ENCODE measurements at regions of chr3 and their contacts with region 1.

Region 1: DNA sequence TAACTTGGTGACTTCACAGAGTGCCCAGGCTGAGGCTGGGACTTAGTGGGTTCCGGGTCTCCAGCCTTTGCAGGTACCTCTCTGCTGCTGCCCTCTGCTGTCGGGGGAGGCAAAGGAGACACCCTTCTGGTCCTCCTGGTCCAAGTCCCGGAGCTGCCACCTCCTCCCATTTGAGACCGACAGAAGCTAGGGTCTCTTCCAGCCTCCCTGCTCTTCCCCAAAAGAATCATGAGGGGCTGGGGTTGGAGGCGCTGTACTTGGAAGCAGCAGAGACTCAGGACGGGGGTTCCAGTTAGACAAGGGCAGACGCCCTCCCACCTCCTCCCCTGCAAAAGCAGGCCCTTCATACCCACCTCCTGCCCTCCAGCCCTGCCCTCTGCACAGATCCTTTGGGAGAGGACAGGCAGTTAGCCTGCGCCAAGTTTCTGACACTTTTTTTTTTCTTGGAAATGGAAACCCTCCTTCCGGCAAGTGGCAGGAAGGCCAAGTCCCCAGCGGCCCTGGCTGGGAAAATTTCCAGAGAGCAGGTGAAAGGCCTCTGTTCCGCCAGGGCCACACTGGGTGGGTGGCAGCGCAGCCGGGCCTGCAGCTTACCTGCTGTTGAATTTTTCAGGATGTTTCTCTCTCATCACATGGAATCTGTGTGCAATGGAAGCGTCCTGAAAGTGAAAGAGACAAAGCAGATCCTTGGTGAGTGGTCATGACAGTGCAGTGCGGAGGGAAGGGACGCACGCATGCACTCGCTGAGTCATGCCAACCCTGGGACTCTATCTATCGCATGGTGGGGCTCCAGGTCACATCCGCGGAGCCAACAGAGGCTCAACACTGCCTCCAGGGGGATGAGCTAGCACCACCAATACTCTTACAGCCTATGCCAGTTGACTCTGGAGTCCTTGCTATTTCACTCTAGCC is 119.9 kb downstream of the DGKG start:
- DNase-seq: peak; percentile 92
- ATAC-seq: peak; percentile 99 to 100
- H3K4me3 ChIP-seq: peak overlapping the region; percentile 51
- H3K27ac ChIP-seq: peak overlapping the region; percentile 90 to 93
- H3K4me1 ChIP-seq: peaks cover 12% of the 10 kb centered on the region
- CTCF ChIP-seq: peak; percentile 65
- EP300 ChIP-seq: no peak
- POLR2A ChIP-seq: peak; percentile 37; the same call in 1 of the 2 replicates
- RAD21 ChIP-seq: peak; percentile 64 to 69

Region 2: DNA sequence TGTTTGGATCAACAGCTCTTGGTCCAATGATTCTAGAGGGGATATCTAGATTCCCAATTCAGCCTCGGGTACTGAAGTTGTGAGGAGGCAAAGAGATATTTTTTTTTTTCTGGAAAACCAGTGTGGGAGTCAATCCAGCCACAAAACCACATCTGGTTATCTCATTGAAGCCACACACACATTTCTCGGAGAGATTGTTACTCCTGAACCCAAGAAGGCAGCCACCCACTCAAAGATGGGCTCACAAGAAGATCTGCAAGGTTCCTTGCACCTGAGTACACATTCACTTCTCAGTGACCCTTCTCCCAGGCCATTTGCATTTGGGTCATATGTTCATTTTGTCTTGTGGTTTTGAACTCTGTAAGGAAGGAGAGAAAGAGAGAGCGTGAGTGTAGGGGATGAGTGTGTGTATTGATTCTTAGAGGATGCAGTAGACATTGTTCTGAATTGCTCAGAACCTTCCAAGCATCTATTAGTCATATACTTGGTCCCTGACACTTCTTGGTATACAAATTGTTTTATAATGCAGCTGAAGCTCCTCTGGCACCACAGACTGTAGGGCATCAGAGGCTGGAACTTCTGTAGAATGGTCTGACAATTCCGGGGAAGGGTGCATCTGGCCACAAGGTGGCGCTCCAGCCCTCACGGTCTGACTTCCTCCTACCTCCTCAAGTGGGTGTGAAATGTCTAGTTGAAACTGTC is 265.0 kb before region 1 on chr3:
- CTCF ChIA-PET with region 1: interaction called, 36 read pairs
- POLR2A ChIA-PET with region 1: interaction called, 9 read pairs
- DNase-seq: peak; percentile 42 to 71
- ATAC-seq: peak; percentile 84 to 88
- H3K4me3 ChIP-seq: no peak overlapping the region
- H3K27ac ChIP-seq: no peak overlapping the region
- H3K4me1 ChIP-seq: peaks cover 8% of the 10 kb centered on the region; the same call in 1 of the 3 replicates
- CTCF ChIP-seq: peak; percentile 83
- EP300 ChIP-seq: no peak
- POLR2A ChIP-seq: no peak
- RAD21 ChIP-seq: peak; percentile 47 to 50; a peak in 3 of 5 replicates

Region 3: GRCh38 chr3:185983495-185984141 is 258.5 kb before region 1 on chr3:
- CTCF ChIA-PET with region 1: interaction called, 36 read pairs
- POLR2A ChIA-PET with region 1: interaction called, 9 read pairs
- DNase-seq: peak; percentile 61 to 76
- ATAC-seq: peak; percentile 80
- H3K4me3 ChIP-seq: no peak overlapping the region
- H3K27ac ChIP-seq: peak overlapping the region in 1 of 2 experiments; percentile 52; a peak in 3 of 6 replicates
- H3K4me1 ChIP-seq: peaks cover 32% of the 10 kb centered on the region
- CTCF ChIP-seq: peak; percentile 73
- EP300 ChIP-seq: no peak
- POLR2A ChIP-seq: no peak
- RAD21 ChIP-seq: peak; percentile 82 to 86

Region 4: DNA sequence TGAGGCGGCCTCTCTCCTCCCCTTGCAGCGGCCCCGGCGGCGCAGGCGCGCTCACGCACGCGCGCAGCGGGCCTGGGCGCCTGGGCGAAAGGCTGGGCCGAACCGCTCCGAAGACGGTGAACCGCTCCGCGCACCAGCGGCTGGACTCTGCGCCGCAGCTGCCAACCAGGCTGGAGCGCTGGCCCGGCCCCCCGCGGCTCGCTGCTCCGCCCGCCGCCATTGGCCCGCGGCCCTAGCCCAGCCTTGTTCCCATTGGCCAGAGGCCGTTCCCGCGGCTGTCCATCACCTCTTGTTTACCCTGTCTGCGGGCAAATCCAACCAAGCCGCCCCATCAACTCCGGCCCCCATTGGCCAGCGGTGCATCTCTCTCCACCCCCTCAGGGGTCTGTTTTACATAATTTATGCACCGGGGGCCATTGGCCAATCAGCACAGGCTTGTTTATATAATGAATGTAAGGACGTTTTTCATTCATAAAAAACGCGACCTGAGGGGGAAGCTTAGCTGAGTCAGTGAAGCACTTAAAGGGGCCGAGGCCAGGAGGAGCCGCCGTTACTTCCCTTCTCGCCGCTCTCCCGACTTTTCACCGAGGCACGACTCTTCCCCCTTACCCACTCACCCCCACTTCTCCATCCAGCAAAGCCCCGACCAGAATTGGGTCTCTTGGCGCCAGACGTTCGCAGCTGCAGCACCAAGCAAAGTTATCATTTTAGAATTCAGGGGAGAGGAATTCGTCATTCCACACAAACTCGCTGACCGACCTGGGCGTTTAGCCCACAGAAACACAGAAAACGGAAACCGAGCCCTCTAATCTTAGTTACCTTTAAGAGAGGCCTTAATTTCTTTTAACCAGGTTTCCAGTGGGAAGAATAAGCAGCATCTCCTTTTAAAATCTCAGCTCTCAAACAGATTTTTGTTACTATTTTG is 133.0 kb before region 1 on chr3 and contains the start of gene ETV5:
- CTCF ChIA-PET with region 1: interaction called, 3 read pairs
- POLR2A ChIA-PET with region 1: interaction called, 11 read pairs
- DNase-seq: peak; percentile 97 to 98
- ATAC-seq: peak; percentile 92
- H3K4me3 ChIP-seq: peak within 1 kb of the TSS; percentile 87
- H3K27ac ChIP-seq: peak within 1 kb of the TSS; percentile 94 to 99
- H3K4me1 ChIP-seq: peaks cover 35% of the 10 kb centered on the region
- CTCF ChIP-seq: no peak
- EP300 ChIP-seq: no peak
- POLR2A ChIP-seq: peak; percentile 85
- RAD21 ChIP-seq: no peak
- polyA plus RNA-seq, gene ETV5: 47.0 and 54.7 TPM in 2 replicates

Region 5: GRCh38 chr3:186217820-186218164 is 24.4 kb before region 1 on chr3:
- CTCF ChIA-PET with region 1: interaction called, 11 read pairs
- POLR2A ChIA-PET with region 1: no interaction called
- DNase-seq: no peak
- ATAC-seq: no peak
- H3K4me3 ChIP-seq: no peak overlapping the region
- H3K27ac ChIP-seq: no peak overlapping the region
- H3K4me1 ChIP-seq: no peaks in the 10 kb centered on the region
- CTCF ChIP-seq: no peak
- EP300 ChIP-seq: no peak
- POLR2A ChIP-seq: no peak
- RAD21 ChIP-seq: no peak

Region 6: GRCh38 chr3:186259612-186260383 is 17.6 kb after region 1 on chr3:
- CTCF ChIA-PET with region 1: interaction called, 37 read pairs
- POLR2A ChIA-PET with region 1: no interaction called
- DNase-seq: peak; percentile 72
- ATAC-seq: peak; percentile 100
- H3K4me3 ChIP-seq: no peak overlapping the region
- H3K27ac ChIP-seq: peak overlapping the region; percentile 22 to 46; a peak in 3 of 6 replicates
- H3K4me1 ChIP-seq: no peaks in the 10 kb centered on the region; the same call in 2 of the 3 replicates
- CTCF ChIP-seq: peak; percentile 76
- EP300 ChIP-seq: no peak
- POLR2A ChIP-seq: no peak
- RAD21 ChIP-seq: peak; percentile 76 to 81

Region 7: GRCh38 chr3:186320862-186321568 is 78.8 kb after region 1 on chr3:
- CTCF ChIA-PET with region 1: no interaction called
- POLR2A ChIA-PET with region 1: no interaction called
- DNase-seq: no peak
- ATAC-seq: no peak
- H3K4me3 ChIP-seq: no peak overlapping the region
- H3K27ac ChIP-seq: no peak overlapping the region
- H3K4me1 ChIP-seq: no peaks in the 10 kb centered on the region
- CTCF ChIP-seq: no peak
- EP300 ChIP-seq: no peak
- POLR2A ChIP-seq: no peak
- RAD21 ChIP-seq: no peak

Region 8: DNA sequence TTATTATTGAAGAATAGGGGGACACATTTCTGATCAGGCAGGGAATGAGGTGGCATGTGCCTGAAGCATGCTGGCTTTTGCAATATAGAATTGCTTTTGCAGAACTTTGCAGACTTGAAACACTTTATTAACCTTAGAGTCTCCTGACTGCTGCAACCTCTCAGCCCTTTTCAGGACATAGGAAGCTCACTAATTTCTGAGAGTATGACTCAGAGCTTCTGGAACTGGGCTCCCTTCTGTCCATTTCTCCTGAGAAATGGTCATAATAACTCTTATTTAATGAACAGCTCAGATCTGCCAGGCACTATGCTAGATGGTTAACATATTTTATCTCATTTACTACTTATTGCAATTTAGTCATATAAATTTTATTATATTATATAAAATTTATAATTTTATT is 158.5 kb after region 1 on chr3:
- CTCF ChIA-PET with region 1: no interaction called
- POLR2A ChIA-PET with region 1: no interaction called
- DNase-seq: no peak
- ATAC-seq: no peak
- H3K4me3 ChIP-seq: no peak overlapping the region
- H3K27ac ChIP-seq: no peak overlapping the region
- H3K4me1 ChIP-seq: no peaks in the 10 kb centered on the region
- CTCF ChIP-seq: no peak
- EP300 ChIP-seq: no peak
- POLR2A ChIP-seq: no peak
- RAD21 ChIP-seq: no peak

Region 9: DNA sequence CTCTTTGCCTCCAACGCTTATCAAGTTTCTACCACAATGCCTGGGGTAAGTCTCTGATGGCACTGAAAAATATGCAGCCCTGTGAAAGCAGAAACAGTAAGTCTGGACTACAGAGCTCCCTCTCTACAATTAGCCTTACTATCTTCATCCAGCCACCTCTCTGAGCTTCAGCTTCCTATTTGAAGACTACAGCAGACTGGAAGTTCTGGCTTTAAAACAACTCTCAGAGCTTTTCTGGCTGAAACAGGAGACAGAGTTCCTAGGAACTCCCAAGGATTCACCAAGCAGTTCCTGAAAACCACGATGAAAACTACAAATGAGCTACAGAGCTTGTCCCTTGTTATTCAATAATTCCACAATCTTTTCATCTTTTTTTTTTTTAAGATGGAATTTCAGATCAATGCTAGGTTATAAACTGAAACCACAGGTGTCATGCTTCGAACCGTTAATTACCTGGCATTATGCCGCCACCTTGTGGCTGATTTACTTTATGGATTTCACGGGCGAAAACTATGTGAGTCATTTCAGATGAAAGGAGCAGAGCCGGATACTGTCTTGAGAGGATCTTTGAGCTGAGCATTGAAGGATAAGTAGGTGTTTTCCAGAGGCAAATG is 298.2 kb after region 1 on chr3:
- CTCF ChIA-PET with region 1: interaction called, 29 read pairs
- POLR2A ChIA-PET with region 1: no interaction called
- DNase-seq: peak; percentile 52 to 59
- ATAC-seq: peak; percentile 70 to 90; a peak in 5 of 6 replicates
- H3K4me3 ChIP-seq: no peak overlapping the region
- H3K27ac ChIP-seq: no peak overlapping the region
- H3K4me1 ChIP-seq: no peaks in the 10 kb centered on the region
- CTCF ChIP-seq: peak; percentile 79
- EP300 ChIP-seq: no peak
- POLR2A ChIP-seq: no peak
- RAD21 ChIP-seq: peak; percentile 82 to 84